GM12878 (cell line): ENCODE measurements at regions of chr18 and their contacts with region 1.

Region 1: DNA sequence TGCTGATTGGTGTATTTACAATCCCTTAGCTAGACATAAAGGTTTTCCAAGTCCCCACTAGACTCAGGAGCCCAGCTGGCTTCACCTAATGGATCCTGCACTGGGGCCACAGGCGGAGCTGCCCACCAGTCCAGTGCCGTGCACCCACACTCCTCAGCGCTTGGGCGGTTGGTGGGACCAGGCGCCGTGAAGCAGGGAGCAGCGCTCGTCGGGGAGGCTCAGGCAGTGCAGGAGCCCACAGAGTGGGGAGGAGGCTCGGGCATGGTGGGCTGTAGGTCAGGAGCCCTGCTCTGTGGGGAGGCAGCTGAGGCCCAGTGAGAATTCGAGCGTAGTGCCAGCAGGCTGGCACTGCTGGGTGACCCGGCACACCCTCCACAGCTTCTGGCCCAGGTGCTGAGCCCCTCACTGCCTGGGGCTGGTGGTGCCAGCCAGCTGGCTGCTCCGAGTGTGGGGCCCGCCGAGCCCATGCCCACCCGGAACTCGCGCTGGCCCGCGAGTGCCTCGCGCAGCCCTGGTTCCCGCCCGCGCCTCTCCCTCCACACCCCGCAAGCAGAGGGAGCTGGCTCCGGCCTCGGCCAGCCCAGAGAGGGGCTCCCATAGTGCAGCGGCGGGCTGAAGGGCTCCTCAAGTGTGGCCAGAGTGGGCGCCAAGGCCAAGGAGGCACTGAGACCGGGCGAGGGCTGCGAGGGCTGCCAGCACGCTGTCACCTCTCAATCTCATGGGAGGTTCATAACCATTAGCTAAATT is 475.6 kb upstream of the DCC start:
- DNase-seq: no peak
- ATAC-seq: no peak
- H3K4me3 ChIP-seq: no peak overlapping the region
- H3K27ac ChIP-seq: no peak overlapping the region
- H3K4me1 ChIP-seq: no peaks in the 10 kb centered on the region
- H3K27me3 ChIP-seq: no peaks in the 10 kb centered on the region
- CTCF ChIP-seq: no peak
- EP300 ChIP-seq: no peak
- POLR2A ChIP-seq: no peak
- RAD21 ChIP-seq: no peak

Region 2: DNA sequence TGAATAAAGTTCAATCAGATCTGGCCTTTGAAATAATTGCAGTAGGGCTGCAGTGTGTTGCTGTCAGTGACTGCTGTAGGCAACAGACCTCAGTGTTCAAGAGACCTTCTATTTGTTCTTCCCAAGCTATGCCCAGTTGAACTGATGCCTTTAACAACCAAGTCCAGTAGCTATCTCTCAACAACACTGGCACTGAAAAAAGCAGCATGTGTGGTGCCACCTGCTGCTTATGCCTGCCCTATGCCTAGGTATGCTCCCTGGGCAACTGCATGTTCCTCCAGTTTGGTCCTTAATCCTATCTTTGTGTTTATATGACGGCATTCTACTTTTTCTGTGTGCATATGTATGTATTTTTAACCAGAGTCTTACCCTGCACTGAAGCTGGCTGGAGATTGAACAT is 143.0 kb before region 1 on chr18:
- CTCF ChIA-PET with region 1: no interaction called
- POLR2A ChIA-PET with region 1: no interaction called
- RAD21 ChIA-PET with region 1: no interaction called
- SMC1A ChIA-PET with region 1: no interaction called
- in situ Hi-C with region 1: no loop called
- intact Hi-C with region 1: no loop called
- DNase-seq: no peak
- ATAC-seq: no peak
- H3K4me3 ChIP-seq: no peak overlapping the region
- H3K27ac ChIP-seq: no peak overlapping the region
- H3K4me1 ChIP-seq: peaks cover 20% of the 10 kb centered on the region
- H3K27me3 ChIP-seq: no peaks in the 10 kb centered on the region; a peak in 1 of 4 replicates
- CTCF ChIP-seq: no peak
- EP300 ChIP-seq: no peak
- POLR2A ChIP-seq: no peak
- RAD21 ChIP-seq: no peak

Region 3: DNA sequence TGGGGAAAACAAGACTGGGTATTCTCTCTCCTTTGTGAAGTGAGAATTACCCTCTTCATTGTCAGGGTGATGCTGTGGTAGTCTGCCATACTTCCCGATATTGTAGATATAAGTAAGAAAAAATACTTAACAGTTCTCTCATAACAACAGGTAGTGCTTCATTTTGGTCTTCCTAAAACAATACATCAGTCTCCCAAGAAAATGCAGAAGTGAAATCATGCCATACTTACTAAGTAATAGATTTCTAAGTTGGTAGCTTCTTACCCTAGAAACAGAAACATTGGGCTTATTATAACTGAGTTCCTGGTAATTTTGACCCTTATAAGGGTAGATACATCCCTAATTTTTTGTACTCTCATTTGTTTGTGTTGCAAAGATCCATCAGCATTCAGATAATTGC is 14.9 kb after region 1 on chr18:
- CTCF ChIA-PET with region 1: interaction called, 5 read pairs
- POLR2A ChIA-PET with region 1: no interaction called
- RAD21 ChIA-PET with region 1: no interaction called
- SMC1A ChIA-PET with region 1: interaction called, 12 read pairs
- in situ Hi-C with region 1: no loop called
- intact Hi-C with region 1: no loop called
- DNase-seq: no peak
- ATAC-seq: peak; percentile 63; the same call in 2 of the 3 replicates
- H3K4me3 ChIP-seq: no peak overlapping the region
- H3K27ac ChIP-seq: no peak overlapping the region
- H3K4me1 ChIP-seq: no peaks in the 10 kb centered on the region
- H3K27me3 ChIP-seq: no peaks in the 10 kb centered on the region
- CTCF ChIP-seq: no peak
- EP300 ChIP-seq: no peak
- POLR2A ChIP-seq: no peak
- RAD21 ChIP-seq: no peak

Region 4: GRCh38 chr18:52000435-52000834 is 136.0 kb after region 1 on chr18:
- CTCF ChIA-PET with region 1: no interaction called
- POLR2A ChIA-PET with region 1: no interaction called
- RAD21 ChIA-PET with region 1: no interaction called
- SMC1A ChIA-PET with region 1: no interaction called
- in situ Hi-C with region 1: no loop called
- intact Hi-C with region 1: no loop called
- DNase-seq: no peak
- ATAC-seq: peak; percentile 81
- H3K4me3 ChIP-seq: no peak overlapping the region
- H3K27ac ChIP-seq: no peak overlapping the region
- H3K4me1 ChIP-seq: no peaks in the 10 kb centered on the region
- H3K27me3 ChIP-seq: no peaks in the 10 kb centered on the region
- CTCF ChIP-seq: no peak
- EP300 ChIP-seq: no peak
- POLR2A ChIP-seq: no peak
- RAD21 ChIP-seq: no peak

Region 5: GRCh38 chr18:52160652-52161051 is 296.3 kb after region 1 on chr18:
- CTCF ChIA-PET with region 1: no interaction called
- POLR2A ChIA-PET with region 1: no interaction called
- RAD21 ChIA-PET with region 1: no interaction called
- SMC1A ChIA-PET with region 1: no interaction called
- in situ Hi-C with region 1: no loop called
- intact Hi-C with region 1: no loop called
- DNase-seq: no peak
- ATAC-seq: no peak
- H3K4me3 ChIP-seq: no peak overlapping the region
- H3K27ac ChIP-seq: no peak overlapping the region
- H3K4me1 ChIP-seq: no peaks in the 10 kb centered on the region
- H3K27me3 ChIP-seq: no peaks in the 10 kb centered on the region
- CTCF ChIP-seq: no peak
- EP300 ChIP-seq: no peak
- POLR2A ChIP-seq: no peak
- RAD21 ChIP-seq: no peak

Region 6: DNA sequence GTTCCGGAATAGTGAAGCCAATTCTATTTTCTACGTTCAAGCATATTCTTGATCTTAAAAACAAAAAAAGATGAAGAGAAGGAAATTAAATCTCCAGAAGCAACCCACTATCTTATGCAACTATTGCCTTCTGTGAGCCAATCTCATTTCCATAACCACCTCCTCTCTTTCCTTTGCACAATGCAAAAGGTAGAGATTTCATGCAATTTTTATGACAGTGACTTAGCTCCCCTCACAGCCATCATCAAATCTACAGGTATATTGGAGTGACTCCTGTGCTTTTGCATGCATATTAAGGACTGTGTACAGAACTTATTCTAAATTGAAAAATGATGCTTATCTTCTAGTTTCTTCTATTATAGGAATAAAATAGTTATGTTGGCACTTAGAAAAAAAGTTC is 667.4 kb after region 1 on chr18:
- CTCF ChIA-PET with region 1: no interaction called
- POLR2A ChIA-PET with region 1: no interaction called
- RAD21 ChIA-PET with region 1: no interaction called
- SMC1A ChIA-PET with region 1: no interaction called
- in situ Hi-C with region 1: no loop called
- intact Hi-C with region 1: no loop called
- DNase-seq: no peak
- ATAC-seq: no peak
- H3K4me3 ChIP-seq: no peak overlapping the region
- H3K27ac ChIP-seq: no peak overlapping the region
- H3K4me1 ChIP-seq: no peaks in the 10 kb centered on the region
- H3K27me3 ChIP-seq: no peaks in the 10 kb centered on the region
- CTCF ChIP-seq: no peak
- EP300 ChIP-seq: no peak
- POLR2A ChIP-seq: no peak
- RAD21 ChIP-seq: no peak